ENCODE measurements at regions of chr1 and their contacts with region 1.

Region 1: DNA sequence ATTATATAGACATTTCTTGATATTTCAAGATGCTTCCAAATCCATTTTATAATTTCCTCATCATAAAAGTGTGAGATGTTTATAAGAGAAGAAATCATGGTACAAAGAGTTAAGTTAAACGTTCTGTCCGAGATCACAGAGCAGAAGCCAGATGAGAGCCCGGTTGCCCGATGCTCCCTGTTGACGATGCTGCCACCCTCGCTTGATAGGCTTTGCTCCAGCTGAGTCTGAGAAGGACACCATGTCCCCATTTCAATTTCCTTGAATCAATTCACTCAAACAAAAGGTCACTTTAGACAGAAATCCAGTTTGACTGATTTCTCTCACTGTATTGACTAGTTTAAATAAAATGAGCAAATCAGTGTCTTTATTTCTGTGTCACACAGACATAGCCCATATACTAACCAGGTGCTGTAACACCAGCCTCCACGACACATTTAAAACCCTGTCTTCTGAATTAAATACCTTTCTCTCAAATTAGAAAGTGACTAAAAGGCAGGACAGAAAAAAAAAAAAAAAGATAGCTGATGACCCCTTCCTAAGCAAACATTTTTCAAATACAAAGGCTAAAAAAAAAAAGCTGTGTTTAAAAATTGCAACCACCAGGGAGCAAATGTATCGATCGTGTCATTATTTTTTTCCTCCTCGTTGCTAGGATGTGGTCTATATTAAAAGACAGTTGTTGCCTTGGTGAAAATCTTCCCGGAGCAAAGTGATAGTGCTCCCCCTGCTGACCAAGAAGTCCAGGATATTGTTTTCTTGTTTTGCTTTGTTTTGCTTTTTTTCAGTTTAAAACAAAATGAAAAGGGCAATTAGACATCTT is 35.2 kb downstream of the DNASE2B start:
- DNase-seq: no peak
- H3K4me3 ChIP-seq: peak overlapping the region; percentile 23 to 36 (median 26)
- H3K27ac ChIP-seq: no peak overlapping the region
- H3K4me1 ChIP-seq: peaks cover 0 to 11% (median 5%) of the 10 kb centered on the region in 4 donors
- H3K27me3 ChIP-seq: no peaks in the 10 kb centered on the region
- CTCF ChIP-seq: peak; percentile 70 to 74 (median 72)
- EP300 ChIP-seq: no peak
- POLR2A ChIP-seq: no peak

Region 2: DNA sequence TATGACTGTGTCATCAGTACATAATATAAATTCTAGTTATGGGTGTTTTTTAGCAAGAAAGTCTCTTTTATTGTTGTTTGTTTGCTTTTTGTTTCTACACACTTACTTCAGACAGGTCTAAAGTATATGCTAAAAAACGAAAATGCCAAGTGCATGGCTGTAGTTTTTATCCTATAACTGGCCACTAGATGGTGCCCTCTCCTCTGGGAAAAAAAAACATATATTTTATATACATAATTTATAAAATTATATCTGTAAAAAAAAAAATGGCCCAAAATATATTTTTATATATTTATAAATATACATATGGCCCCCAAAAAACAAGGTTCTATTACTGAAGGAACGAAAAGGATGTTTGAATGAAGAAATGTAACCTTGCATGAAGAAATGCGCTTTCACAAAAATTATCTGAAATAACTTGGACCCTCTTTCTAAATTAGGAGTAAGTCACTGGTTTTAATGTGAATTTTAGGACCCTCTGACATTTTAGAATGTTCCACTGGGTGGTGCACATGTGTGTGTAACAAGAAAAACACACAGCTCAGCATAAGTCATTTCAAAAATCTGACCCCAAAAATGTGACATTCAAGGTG is 528.1 kb before region 1 on chr1:
- intact Hi-C with region 1: loop called (anchors 10 kb)
- DNase-seq: no peak
- H3K4me3 ChIP-seq: no peak overlapping the region
- H3K27ac ChIP-seq: no peak overlapping the region
- H3K4me1 ChIP-seq: peaks cover 0 to 4% (median 2%) of the 10 kb centered on the region in 4 donors
- H3K27me3 ChIP-seq: no peaks in the 10 kb centered on the region
- CTCF ChIP-seq: peak; percentile 41 to 70 (median 57)
- EP300 ChIP-seq: no peak
- POLR2A ChIP-seq: no peak

Region 3: DNA sequence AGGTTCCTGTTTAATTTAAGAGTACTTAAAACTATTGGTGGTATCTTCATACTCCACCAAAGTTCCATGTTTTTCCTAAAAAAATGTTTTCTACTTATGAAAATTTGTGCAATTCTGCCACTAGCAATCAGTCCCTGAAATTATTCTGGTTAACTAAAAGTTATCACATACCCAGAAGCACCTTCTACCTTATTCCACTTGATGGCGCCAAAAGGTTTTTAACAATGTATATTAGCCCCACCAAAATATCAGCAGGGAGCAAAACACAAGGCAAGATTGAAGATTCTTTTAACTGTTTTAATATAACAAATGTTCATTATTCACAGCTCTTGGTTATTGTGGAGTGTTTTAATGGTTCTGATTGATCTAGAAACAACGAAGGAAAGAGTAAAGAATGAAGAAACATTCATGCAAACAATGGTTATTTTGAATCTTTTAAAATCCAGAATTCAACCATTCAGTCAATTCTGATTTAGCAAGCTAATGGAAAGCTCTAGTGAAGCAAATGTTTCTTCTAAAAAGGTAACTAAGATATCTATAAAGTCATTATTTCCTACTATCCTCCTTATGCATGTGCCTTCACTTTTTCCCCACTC is 501.7 kb before region 1 on chr1:
- intact Hi-C with region 1: loop called (anchors 10 kb)
- DNase-seq: no peak
- H3K4me3 ChIP-seq: no peak overlapping the region
- H3K27ac ChIP-seq: no peak overlapping the region
- H3K4me1 ChIP-seq: peaks cover 0 to 16% (median 7%) of the 10 kb centered on the region in 4 donors
- H3K27me3 ChIP-seq: no peaks in the 10 kb centered on the region
- CTCF ChIP-seq: peak; percentile 75 to 82 (median 79)
- EP300 ChIP-seq: no peak
- POLR2A ChIP-seq: no peak

Region 4: DNA sequence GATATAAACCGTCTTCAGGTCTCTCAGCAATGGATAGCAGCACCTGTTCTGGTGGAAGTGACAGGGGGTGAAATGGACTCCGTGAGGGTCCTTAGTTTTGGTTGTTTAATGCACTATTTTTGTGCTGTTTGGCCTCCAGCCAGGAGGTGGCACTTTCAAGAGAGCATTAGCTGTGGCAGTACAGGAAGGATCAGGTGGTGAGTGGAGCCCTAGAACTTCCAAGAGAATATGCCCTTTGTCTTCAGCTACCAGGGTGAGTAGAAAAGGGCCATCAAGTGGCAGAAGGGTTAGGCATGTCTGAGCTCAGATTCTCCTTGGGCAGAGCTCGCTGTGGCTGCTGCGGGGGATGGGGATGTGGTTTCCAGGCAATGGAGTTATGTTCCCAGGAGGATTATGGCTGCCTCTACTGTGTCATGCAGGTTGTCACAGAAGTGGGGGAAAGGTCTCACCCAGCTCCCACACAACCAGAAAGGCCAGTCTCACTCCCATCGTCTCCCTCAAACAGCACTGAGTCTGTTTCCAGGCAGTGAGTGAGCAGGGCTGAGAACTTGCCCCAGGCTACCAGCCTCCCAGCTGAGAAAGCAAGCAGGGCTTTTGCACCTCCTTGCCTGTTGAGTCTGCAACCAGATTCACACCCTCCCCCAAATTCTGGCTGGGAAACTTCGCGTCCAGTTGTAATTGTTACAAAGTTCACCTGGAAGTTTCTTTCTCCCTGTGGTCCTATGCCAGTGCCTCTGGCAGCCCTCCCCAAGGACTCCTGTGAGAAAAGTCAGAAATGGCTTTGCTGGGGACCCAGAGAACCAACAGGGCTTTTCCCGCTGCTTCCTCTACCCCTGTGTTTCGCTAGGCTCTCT is 395.5 kb before region 1 on chr1:
- intact Hi-C with region 1: no loop called
- DNase-seq: peak; percentile 75
- H3K4me3 ChIP-seq: no peak overlapping the region
- H3K27ac ChIP-seq: no peak overlapping the region
- H3K4me1 ChIP-seq: no peaks in the 10 kb centered on the region
- H3K27me3 ChIP-seq: no peaks in the 10 kb centered on the region
- CTCF ChIP-seq: no peak
- EP300 ChIP-seq: no peak
- POLR2A ChIP-seq: no peak

Region 5: DNA sequence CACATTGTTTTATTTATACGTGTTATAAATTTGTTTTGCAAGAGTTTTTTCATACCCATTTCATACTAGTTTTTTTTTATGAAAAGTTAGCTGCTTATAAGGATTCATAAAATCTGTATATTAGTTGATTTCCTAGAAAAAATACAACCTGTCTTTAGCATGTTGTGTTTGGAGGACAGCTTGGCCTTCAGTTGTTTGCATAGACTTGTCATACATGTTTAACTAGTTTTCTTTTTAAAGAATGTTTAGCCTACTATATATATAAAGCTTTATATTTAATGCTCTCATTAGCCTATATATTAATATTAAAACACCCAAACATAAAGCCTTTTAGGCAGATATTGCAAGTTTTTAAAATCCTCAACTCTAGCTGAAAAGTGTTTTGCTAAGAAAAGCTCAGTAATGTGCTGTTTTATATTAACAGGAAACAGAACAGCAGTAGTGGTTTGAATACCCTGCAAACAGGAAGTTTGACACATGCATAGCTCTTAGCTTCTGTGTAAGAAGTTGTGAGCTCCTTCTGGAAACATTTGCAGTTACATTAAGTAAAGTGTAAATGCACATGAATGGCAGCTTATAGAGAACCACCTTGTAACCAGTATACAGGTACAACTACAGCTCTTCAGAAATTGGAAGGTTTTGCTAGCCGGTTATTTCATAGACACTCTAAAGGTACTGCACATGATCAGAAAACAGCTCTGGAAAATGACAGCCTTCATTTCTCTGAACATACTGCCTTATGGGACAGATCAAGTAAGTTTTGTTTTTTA is 289.5 kb before region 1 on chr1 and contains the start of gene PRKACB:
- intact Hi-C with region 1: loop called (anchors 5 kb)
- DNase-seq: no peak
- H3K4me3 ChIP-seq: peak within 1 kb of the TSS in 3 of 4 donors; percentile 5 to 21 (median 15)
- H3K27ac ChIP-seq: peak within 1 kb of the TSS in 1 of 4 donors; percentile 14
- H3K4me1 ChIP-seq: no peaks in the 10 kb centered on the region
- H3K27me3 ChIP-seq: no peaks in the 10 kb centered on the region
- CTCF ChIP-seq: no peak
- EP300 ChIP-seq: no peak
- POLR2A ChIP-seq: no peak
- total RNA-seq, gene PRKACB: 44.4 to 59.4 (median 52.3) TPM

Measured in esophagus muscularis mucosa (tissue), 4 donors.